OCI-LY7 (cell line): ENCODE measurements at regions of chr22 and their contacts with region 1.

Region 1: DNA sequence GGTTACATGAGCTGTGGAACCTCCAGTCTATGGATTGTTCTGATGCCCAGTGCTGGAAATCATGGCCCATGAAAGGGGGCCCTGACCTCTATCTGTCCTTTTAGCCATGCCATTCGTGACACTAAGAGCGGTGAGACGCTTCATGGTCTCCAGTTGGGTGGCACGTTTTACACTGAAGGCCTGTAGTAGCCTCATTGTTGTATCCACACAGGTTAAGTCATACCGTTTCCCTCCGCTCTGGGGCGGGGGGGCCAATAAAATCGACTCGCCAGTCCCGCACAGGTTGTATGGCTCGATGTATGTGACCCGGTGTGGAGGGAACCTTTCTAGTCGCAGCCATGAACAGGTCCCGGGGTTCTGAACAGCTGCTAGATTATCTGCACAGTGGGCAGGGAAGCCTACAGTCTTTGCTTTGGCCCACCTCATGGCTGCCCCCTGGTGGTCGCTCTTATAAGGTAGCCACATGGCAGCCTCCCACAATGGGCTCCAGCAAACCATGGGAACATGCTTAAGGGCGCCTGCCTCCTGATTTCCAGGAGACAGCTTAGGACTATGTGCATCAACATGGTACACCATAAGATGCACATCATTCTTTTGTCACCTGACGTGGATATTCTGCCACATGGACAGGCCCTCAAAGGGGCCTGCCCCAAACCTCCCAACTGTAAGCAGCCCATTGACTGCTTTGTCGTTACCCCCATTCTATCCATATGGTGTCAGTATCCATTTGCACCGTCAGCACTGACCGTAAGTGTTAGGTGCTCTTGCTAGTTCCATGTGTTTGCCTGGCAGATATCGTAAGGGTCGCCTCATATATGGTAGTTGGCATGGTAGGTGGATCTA is 19.7 kb upstream of the APOL3 start:
- DNase-seq: peak; percentile 73
- H3K4me3 ChIP-seq: no peak overlapping the region
- H3K27ac ChIP-seq: no peak overlapping the region
- H3K4me1 ChIP-seq: no peaks in the 10 kb centered on the region
- CTCF ChIP-seq: peak; percentile 88

Region 2: GRCh38 chr22:36144886-36145541 is 35.2 kb before region 1 on chr22:
- CTCF ChIA-PET with region 1: interaction called, 3 read pairs
- POLR2A ChIA-PET with region 1: interaction called, 4 read pairs
- intact Hi-C with region 1: loop called (anchors 1 kb)
- DNase-seq: peak; percentile 57
- H3K4me3 ChIP-seq: no peak overlapping the region
- H3K27ac ChIP-seq: no peak overlapping the region
- H3K4me1 ChIP-seq: peaks cover 5% of the 10 kb centered on the region
- CTCF ChIP-seq: peak; percentile 87

Region 3: GRCh38 chr22:36194971-36195370 is 14.7 kb after region 1 on chr22:
- CTCF ChIA-PET with region 1: no interaction called
- POLR2A ChIA-PET with region 1: no interaction called
- intact Hi-C with region 1: no loop called
- DNase-seq: peak; percentile 58
- H3K4me3 ChIP-seq: no peak overlapping the region
- H3K27ac ChIP-seq: no peak overlapping the region
- H3K4me1 ChIP-seq: peaks cover 12% of the 10 kb centered on the region
- CTCF ChIP-seq: peak; percentile 85